Activated T-helper 1 cell treated with anti-CD3 and anti-CD28 coated beads, Interleukin-12 subunit alpha, Interleukin-12 subunit beta, Interleukin-2, Interleukin-4 antibody, amounts not matched to agents 30 ng/mL and 10 ng/mL and 1 ng/mL, durations not matched to agents 14 hours and 24 hours and 36 hours (primary cell): ENCODE measurements at regions of chr19 and their contacts with region 1.

Region 1: DNA sequence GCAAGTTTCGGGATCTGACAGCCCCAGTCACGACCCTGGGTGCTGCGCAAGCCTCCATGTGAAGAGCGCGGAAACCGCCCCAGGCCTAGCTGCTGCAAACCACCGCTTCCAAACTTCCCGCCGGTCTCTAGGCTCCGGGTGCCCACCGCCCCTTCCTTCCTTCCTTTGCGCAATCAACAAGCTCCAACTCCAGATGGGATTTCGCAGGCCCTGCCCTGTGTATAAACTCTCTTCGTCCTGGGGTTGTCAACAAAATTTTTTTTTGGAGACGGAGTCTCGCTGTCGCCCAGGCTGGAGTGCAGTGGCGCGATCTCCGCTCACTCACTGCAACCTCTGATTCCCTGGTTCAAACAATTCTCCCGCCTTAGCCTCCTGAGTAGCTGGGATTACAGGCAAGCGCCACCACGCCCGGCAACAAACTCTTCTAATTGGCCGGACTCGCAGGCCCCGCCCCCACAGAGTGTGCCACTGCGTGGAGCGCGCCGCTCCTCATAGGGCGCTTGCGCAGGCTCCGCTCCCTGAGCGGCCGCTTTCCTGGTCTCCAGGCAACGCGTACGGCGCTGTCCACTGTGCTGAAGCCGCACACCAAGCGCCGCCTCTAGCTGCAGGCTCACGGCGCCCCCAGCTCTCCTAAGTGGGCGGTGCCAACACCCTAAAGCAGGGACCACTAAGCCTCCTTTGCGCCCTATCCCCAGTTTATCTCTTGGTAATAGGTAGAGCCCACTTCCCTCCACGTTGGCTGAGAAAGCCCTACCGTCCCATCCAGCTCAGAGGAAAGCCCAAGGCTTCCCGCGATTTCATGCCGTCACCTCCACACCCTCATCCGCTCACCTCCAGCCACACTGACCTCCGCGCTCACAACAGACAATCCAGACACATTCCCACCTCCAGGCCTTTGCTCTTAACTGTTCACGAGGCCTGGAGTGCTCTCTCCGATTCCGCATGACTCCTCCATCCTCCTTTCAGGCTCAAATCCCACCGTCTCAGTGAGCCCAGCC is 5.5 kb upstream of the QTRT1 start:
- DNase-seq: peak; percentile 91
- H3K4me3 Mint-ChIP-seq: peak overlapping the region; percentile 55
- H3K27ac Mint-ChIP-seq: no peak overlapping the region
- H3K4me1 Mint-ChIP-seq: peaks cover 26% of the 10 kb centered on the region
- H3K27me3 Mint-ChIP-seq: peaks cover 6% of the 10 kb centered on the region

Region 2: GRCh38 chr19:10332955-10333757 is 362.5 kb before region 1 on chr19 and contains the start of gene RAVER1:
- intact Hi-C with region 1: loop called (anchors 10 kb)
- DNase-seq: peak; percentile 95
- H3K4me3 Mint-ChIP-seq: peak within 1 kb of the TSS; percentile 90
- H3K27ac Mint-ChIP-seq: peak within 1 kb of the TSS; percentile 95
- H3K4me1 Mint-ChIP-seq: peaks cover 11% of the 10 kb centered on the region
- H3K27me3 Mint-ChIP-seq: no peaks in the 10 kb centered on the region
- total RNA-seq, gene RAVER1: 92.5 and 92.8 TPM in 2 replicates

Region 3: DNA sequence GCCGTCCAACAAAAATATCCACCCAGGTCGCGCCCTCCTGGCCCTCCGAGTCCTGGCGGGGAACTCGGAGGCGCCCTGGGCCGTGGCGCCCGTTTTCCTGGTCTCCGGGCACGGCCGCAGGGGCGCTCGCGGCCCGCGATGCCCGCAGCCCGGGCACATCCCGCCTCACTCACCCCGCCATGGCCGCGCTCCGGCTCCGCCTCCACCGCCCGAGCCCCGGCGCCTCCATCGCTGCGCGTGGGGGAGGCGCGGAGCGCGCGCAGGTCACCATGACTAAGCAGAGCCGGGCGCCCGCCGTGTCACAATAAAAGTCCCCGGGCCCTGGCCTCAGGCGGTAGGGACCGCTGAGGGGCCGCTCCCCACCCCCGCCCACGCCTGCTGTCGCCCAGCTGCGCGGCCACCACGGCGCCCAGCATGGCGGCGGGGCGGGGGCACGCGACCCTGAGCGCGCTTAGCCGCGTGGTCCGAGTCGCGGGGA is 193.1 kb before region 1 on chr19:
- intact Hi-C with region 1: loop called (anchors 5 kb)
- DNase-seq: peak; percentile 92
- H3K4me3 Mint-ChIP-seq: peak overlapping the region; percentile 94
- H3K27ac Mint-ChIP-seq: peak overlapping the region; percentile 88
- H3K4me1 Mint-ChIP-seq: peaks cover 31% of the 10 kb centered on the region
- H3K27me3 Mint-ChIP-seq: no peaks in the 10 kb centered on the region

Region 4: DNA sequence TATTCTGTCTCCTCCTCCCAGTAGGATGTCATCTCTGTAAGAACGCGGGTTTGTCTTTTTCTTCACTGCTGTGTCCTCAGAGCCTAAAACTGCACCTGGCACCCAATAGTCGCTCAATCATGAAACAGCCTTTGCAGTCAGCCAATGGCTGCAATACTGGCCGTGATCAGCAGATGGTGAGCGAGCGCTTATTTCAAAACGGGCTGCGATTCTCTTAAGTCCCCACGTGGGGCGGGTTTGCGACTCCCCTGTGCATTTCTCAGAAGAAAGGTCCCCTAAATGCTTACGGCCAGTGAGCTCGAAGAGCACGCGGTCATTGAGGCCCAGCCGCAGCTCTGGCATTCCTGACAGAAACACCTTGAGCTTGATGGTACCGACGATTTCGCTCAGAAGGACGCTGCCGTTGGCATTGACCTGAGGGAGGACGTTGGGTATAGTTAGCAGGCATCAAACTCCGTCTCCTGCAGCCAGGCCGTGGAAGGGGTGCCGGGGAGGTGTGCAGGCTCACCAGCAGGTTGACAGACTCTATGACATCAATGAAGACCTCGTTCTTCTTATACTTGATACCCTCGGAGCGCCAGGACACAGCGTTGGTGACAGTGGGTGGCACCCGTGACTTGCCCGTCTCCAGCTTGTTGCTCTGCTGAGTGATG is 114.6 kb before region 1 on chr19:
- intact Hi-C with region 1: loop called (anchors 1 kb)
- DNase-seq: peak; percentile 81
- H3K4me3 Mint-ChIP-seq: no peak overlapping the region
- H3K27ac Mint-ChIP-seq: no peak overlapping the region
- H3K4me1 Mint-ChIP-seq: peaks cover 12% of the 10 kb centered on the region
- H3K27me3 Mint-ChIP-seq: peaks cover 6% of the 10 kb centered on the region

Region 5: DNA sequence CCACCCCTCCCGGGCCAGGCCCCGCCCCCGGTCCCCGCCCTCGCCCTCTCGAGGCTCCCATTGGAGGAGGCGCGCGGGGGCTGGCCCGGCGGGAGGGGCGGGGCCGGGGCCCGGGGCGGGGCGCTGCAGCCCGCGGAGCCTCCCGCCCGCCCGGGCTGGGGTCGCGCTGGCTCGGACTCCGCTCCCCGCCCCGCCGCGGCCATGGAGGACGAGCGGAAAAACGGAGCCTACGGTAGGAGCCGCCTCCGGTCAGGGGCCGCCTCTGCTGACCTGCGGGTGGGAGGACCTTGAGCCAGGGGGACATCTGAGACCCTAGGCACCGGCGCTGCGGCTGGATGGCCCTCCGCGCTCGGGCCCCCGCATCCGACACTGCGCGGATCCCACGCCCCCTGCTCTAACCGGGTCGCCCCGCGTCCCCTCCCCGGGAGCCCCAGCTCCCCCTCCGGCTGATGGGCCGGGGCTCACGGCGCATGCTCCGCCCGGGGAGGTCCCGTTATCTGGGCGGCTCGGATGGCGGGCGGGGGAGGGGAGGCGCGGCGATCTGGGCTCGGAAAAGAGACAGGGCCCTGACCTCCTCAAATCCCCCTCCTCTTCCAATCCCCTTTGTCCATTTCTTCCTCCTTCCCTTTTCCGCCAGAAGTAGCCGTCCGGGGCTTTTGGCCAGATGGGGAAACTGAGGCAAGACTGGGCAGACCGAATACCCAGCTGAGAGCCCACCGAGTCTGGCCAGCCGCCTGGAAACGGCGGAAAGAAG is 93.2 kb before region 1 on chr19:
- intact Hi-C with region 1: loop called (anchors 1 kb)
- DNase-seq: peak; percentile 75
- H3K4me3 Mint-ChIP-seq: peak overlapping the region; percentile 99
- H3K27ac Mint-ChIP-seq: peak overlapping the region; percentile 100
- H3K4me1 Mint-ChIP-seq: peaks cover 24% of the 10 kb centered on the region
- H3K27me3 Mint-ChIP-seq: peaks cover 8% of the 10 kb centered on the region

Region 6: GRCh38 chr19:10864538-10864899 is 168.8 kb after region 1 on chr19:
- intact Hi-C with region 1: no loop called
- DNase-seq: peak; percentile 68
- H3K4me3 Mint-ChIP-seq: no peak overlapping the region
- H3K27ac Mint-ChIP-seq: peak overlapping the region; percentile 46
- H3K4me1 Mint-ChIP-seq: peaks cover 30% of the 10 kb centered on the region
- H3K27me3 Mint-ChIP-seq: no peaks in the 10 kb centered on the region